ENCODE measurements at regions of chr3 and their contacts with region 1.

Region 1: DNA sequence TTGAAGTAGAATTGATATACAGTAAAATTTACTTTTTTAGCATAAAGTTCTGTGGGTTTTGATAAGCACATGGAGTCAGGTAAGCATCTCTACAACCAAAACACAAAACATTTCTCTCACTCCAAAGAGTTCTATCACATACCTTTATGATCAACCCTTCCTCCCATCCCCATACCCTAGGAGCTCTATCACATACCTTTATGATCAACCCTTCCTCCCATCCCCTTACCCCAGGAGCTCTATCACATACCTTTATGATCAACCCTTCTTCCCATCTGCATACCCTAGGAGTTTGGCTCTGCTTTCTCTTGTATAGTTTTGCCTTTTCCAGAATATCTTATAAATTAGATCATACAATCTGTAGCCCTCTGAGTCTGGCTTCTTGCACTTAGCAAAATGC is 315.1 kb downstream of the ROBO2 start:
- DNase-seq: no peak
- ATAC-seq: no peak
- H3K4me3 ChIP-seq: no peak overlapping the region
- H3K27ac ChIP-seq: no peak overlapping the region
- H3K4me1 ChIP-seq: no peaks in the 10 kb centered on the region
- H3K27me3 ChIP-seq: no peaks in the 10 kb centered on the region
- CTCF ChIP-seq: no peak

Region 2: GRCh38 chr3:77222701-77223100 is 132.3 kb before region 1 on chr3:
- CTCF ChIA-PET with region 1: no interaction called
- POLR2A ChIA-PET with region 1: no interaction called
- intact Hi-C with region 1: no loop called
- DNase-seq: no peak
- ATAC-seq: no peak
- H3K4me3 ChIP-seq: no peak overlapping the region
- H3K27ac ChIP-seq: no peak overlapping the region
- H3K4me1 ChIP-seq: no peaks in the 10 kb centered on the region
- H3K27me3 ChIP-seq: peaks cover 52% of the 10 kb centered on the region
- CTCF ChIP-seq: no peak

Region 3: GRCh38 chr3:77906102-77906709 is 551.2 kb after region 1 on chr3:
- CTCF ChIA-PET with region 1: no interaction called
- POLR2A ChIA-PET with region 1: no interaction called
- intact Hi-C with region 1: loop called (anchors 5 kb)
- DNase-seq: peak; percentile 96
- ATAC-seq: peak; percentile 95
- H3K4me3 ChIP-seq: no peak overlapping the region
- H3K27ac ChIP-seq: peak overlapping the region; percentile 95
- H3K4me1 ChIP-seq: peaks cover 24% of the 10 kb centered on the region
- H3K27me3 ChIP-seq: no peaks in the 10 kb centered on the region
- CTCF ChIP-seq: no peak; the same call in 1 of the 2 replicates

Measured in PC-3 (cell line).